T-cell (primary cell): ENCODE measurements at regions of chr2 and their contacts with region 1.

Region 1: GRCh38 chr2:65227425-65228262 is at the start of gene ACTR2:
- DNase-seq: peak; percentile 85 to 96 (median 93)
- ATAC-seq: peak; percentile 96 to 97 (median 97)
- H3K4me3 ChIP-seq: peak within 1 kb of the TSS; percentile 90 to 99
- H3K4me3 Mint-ChIP-seq: peak within 1 kb of the TSS; percentile 98 to 99 (median 99)
- H3K27ac ChIP-seq: peak within 1 kb of the TSS; percentile 95
- H3K27ac Mint-ChIP-seq: peak within 1 kb of the TSS; percentile 97 to 99
- H3K4me1 ChIP-seq: peaks cover 26 to 33% of the 10 kb centered on the region in 2 experiments
- H3K4me1 Mint-ChIP-seq: peaks cover 34 to 45% (median 44%) of the 10 kb centered on the region in 3 donors
- H3K27me3 ChIP-seq: no peaks in the 10 kb centered on the region
- H3K27me3 Mint-ChIP-seq: peaks cover 0 to 2% of the 10 kb centered on the region in 2 donors
- total RNA-seq, gene ACTR2: 234 to 267 (median 246) TPM

Region 2: DNA sequence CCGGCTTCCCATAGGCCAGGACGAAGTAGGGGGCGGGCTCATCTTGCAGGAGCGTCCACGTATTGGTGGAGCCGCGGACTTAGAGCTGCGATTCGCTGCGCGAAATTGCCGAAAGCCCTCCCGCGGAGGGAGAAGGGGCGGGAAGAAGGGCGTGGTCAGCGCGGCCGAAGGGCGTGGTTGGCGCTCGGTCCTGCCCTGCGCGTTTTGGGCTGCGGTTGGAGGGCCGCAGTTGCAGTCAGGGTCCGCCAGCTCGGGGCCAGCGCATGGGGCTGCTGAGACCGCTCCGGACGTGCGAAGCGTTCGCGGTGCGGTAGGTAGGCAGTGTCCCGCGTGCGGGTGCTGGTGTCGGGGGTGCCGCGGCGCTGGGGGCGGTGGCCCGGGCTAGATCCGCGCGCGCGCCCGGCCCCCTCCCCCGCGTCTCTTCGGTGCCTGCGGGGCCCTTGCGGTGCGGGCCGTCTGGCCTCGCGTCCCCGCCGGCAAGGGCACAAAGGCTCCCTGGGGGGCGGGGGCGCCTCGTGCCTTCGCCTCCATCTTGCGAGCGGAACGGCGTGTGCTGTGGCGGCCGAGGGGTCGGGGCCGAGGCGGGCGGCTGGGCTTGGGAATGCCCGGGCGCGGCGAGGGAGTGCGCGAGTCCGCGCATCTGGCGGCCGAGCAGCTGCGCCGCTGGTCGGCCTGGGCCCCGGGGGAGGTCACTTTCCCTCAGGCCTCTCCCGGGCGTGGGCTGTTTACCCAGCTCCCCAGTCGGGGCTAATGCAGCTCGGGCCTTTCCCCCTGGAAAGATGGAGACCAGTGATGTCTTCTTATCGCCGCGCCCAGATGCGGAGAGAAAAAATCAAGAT is 171.2 kb before region 1 on chr2 and contains the start of gene CEP68:
- CTCF ChIA-PET with region 1: interaction called in 1 of 2 experiments, 5 read pairs
- POLR2A ChIA-PET with region 1: interaction called, 8 to 14 read pairs
- DNase-seq: peak; percentile 90 to 97 (median 94)
- ATAC-seq: peak; percentile 90 to 93 (median 90)
- H3K4me3 ChIP-seq: peak within 1 kb of the TSS; percentile 52 to 86
- H3K4me3 Mint-ChIP-seq: peak within 1 kb of the TSS; percentile 95 to 97 (median 96)
- H3K27ac ChIP-seq: peak within 1 kb of the TSS; percentile 63
- H3K27ac Mint-ChIP-seq: peak within 1 kb of the TSS; percentile 92 to 94
- H3K4me1 ChIP-seq: peaks cover 20 to 59% of the 10 kb centered on the region in 2 experiments
- H3K4me1 Mint-ChIP-seq: peaks cover 70 to 74% (median 72%) of the 10 kb centered on the region in 3 donors
- H3K27me3 ChIP-seq: no peaks in the 10 kb centered on the region
- H3K27me3 Mint-ChIP-seq: no peaks in the 10 kb centered on the region
- total RNA-seq, gene CEP68: 24.1 to 41.4 (median 37.4) TPM

Region 3: GRCh38 chr2:65129826-65130663 is 97.6 kb before region 1 on chr2 and contains the start of gene RAB1A:
- CTCF ChIA-PET with region 1: interaction called in 1 of 2 experiments, 7 read pairs
- POLR2A ChIA-PET with region 1: interaction called, 9 to 26 read pairs
- DNase-seq: peak; percentile 96 to 100 (median 99)
- ATAC-seq: peak; percentile 92 to 95 (median 94)
- H3K4me3 ChIP-seq: peak within 1 kb of the TSS; percentile 92 to 96
- H3K4me3 Mint-ChIP-seq: peak within 1 kb of the TSS; percentile 95 to 100 (median 100)
- H3K27ac ChIP-seq: peak within 1 kb of the TSS; percentile 90
- H3K27ac Mint-ChIP-seq: peak within 1 kb of the TSS; percentile 99 to 100
- H3K4me1 ChIP-seq: peaks cover 24 to 29% of the 10 kb centered on the region in 2 experiments
- H3K4me1 Mint-ChIP-seq: peaks cover 39 to 48% (median 43%) of the 10 kb centered on the region in 3 donors
- H3K27me3 ChIP-seq: no peaks in the 10 kb centered on the region
- H3K27me3 Mint-ChIP-seq: no peaks in the 10 kb centered on the region
- total RNA-seq, gene RAB1A: 39.1 to 54.3 (median 42.6) TPM

Region 4: GRCh38 chr2:65153514-65153913 is 74.1 kb before region 1 on chr2:
- CTCF ChIA-PET with region 1: interaction called in 1 of 2 experiments, 3 read pairs
- POLR2A ChIA-PET with region 1: interaction called in 1 of 2 experiments, 13 read pairs
- DNase-seq: no peak
- ATAC-seq: no peak
- H3K4me3 ChIP-seq: no peak overlapping the region
- H3K4me3 Mint-ChIP-seq: no peak overlapping the region
- H3K27ac ChIP-seq: no peak overlapping the region
- H3K27ac Mint-ChIP-seq: no peak overlapping the region
- H3K4me1 ChIP-seq: no peaks in the 10 kb centered on the region
- H3K4me1 Mint-ChIP-seq: no peaks in the 10 kb centered on the region
- H3K27me3 ChIP-seq: no peaks in the 10 kb centered on the region
- H3K27me3 Mint-ChIP-seq: no peaks in the 10 kb centered on the region

Region 5: DNA sequence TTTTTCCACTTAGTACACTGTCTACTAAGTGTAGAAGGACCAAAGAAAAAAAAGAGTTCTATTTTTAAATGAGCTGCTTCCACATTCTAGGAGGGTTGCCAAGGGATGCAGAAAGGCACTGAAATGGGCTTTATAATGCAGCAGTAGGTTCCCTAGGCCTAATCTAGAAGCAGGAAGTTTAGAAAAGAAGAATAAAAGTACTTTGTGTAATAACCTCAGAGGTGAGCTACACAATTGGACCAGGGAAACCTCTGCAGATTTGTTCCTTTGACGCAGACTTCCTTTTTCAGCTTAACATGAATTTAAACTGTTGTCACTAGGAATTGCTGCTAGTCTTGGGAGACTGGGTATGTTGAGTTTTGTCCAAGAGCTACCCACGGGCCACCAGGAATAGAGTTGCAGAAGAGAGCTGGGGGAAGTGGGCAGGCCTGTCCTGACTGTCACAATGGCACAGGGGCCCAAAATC is 63.2 kb before region 1 on chr2:
- CTCF ChIA-PET with region 1: interaction called in 1 of 2 experiments, 3 read pairs
- POLR2A ChIA-PET with region 1: interaction called in 1 of 2 experiments, 10 read pairs
- DNase-seq: no peak
- ATAC-seq: no peak
- H3K4me3 ChIP-seq: no peak overlapping the region
- H3K4me3 Mint-ChIP-seq: no peak overlapping the region
- H3K27ac ChIP-seq: no peak overlapping the region
- H3K27ac Mint-ChIP-seq: peak overlapping the region in 1 of 2 donors; percentile 2
- H3K4me1 ChIP-seq: peaks cover 11% of the 10 kb centered on the region in 2 experiments
- H3K4me1 Mint-ChIP-seq: peaks cover 17 to 44% (median 21%) of the 10 kb centered on the region in 3 donors
- H3K27me3 ChIP-seq: no peaks in the 10 kb centered on the region
- H3K27me3 Mint-ChIP-seq: no peaks in the 10 kb centered on the region

Region 6: DNA sequence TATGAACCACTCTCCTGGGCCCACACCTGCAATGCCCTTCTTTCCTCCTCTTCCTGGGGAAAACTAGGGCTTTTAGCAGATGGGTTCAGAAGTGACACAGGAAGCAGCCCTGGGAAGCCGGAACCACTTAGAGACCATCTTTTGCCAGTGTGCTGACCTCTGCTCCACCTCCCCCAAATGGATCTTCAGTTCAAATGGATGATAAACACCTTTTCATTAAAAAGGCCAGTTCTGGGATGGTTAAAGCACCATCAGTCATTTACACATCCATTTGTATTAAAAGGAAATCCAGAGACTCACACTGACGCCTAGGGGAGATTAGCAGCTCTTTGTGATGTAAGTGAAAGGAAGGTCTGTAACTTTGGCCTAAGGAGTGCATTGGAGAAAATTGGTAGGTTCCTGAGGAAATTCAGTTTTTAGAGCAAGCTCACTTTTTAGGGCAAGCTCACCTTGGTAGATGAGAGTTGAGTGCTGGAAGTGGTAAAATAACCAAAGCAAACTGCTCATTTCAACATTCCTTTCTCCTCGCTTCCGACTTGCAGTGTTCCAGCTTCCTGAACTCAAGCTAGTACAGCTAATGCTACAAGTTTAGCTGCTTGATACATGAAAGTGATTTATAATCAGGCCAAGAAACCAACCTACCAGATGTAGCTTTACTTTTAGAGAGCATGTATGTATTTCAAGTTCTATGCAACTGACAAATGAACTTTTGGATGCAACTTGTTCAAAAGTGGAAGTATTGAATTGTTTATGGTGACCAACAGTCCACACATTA is 47.7 kb after region 1 on chr2:
- CTCF ChIA-PET with region 1: no interaction called
- POLR2A ChIA-PET with region 1: interaction called in 1 of 2 experiments, 11 read pairs
- DNase-seq: no peak
- ATAC-seq: peak in 1 of 4 experiments; percentile 6
- H3K4me3 ChIP-seq: no peak overlapping the region
- H3K4me3 Mint-ChIP-seq: no peak overlapping the region
- H3K27ac ChIP-seq: no peak overlapping the region
- H3K27ac Mint-ChIP-seq: no peak overlapping the region
- H3K4me1 ChIP-seq: peaks cover 8 to 13% of the 10 kb centered on the region in 2 experiments
- H3K4me1 Mint-ChIP-seq: peaks cover 8 to 16% (median 13%) of the 10 kb centered on the region in 3 donors
- H3K27me3 ChIP-seq: no peaks in the 10 kb centered on the region
- H3K27me3 Mint-ChIP-seq: no peaks in the 10 kb centered on the region

Region 7: DNA sequence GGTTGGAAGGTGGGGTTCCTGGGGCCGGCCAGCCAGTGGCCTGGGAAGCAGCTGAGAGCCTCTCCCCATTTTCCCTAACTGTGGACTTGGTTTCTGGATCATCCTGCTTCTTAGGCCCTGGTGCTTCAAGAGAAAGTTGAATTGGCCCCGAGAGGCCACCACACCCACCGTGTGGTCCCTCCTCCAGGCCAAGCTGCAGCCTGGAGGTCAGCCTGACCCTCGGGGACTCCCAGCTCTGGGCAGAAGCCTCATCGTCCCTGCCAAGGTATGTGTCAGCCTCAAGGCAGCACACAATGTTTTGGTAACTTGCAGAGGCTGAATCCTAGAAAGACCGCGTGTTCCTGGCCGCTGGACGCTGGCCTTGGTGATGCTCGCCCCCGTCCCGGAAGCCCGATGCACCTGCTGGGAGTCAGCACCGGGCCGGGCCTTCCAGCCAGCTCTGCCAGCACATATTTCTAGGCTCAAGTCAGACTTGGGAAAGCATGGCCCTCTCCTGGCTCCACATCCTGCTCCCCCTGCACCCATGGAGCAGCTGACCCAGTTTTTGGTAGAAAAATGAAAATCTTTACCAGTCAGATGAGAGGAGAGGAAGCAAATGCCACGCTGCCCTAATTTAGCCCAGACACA is 72.6 kb after region 1 on chr2:
- CTCF ChIA-PET with region 1: no interaction called
- POLR2A ChIA-PET with region 1: interaction called in 1 of 2 experiments, 11 read pairs
- DNase-seq: peak in 2 of 35 experiments; percentile 7 to 11
- ATAC-seq: peak in 1 of 4 experiments; percentile 1
- H3K4me3 ChIP-seq: peak overlapping the region; percentile 23 to 77
- H3K4me3 Mint-ChIP-seq: peak overlapping the region; percentile 74 to 88 (median 75)
- H3K27ac ChIP-seq: no peak overlapping the region
- H3K27ac Mint-ChIP-seq: peak overlapping the region; percentile 86 to 91
- H3K4me1 ChIP-seq: peaks cover 31 to 34% of the 10 kb centered on the region in 2 experiments
- H3K4me1 Mint-ChIP-seq: peaks cover 31 to 43% (median 38%) of the 10 kb centered on the region in 3 donors
- H3K27me3 ChIP-seq: peaks cover 0 to 7% of the 10 kb centered on the region in 2 experiments
- H3K27me3 Mint-ChIP-seq: no peaks in the 10 kb centered on the region